ENCODE measurements at regions of chr3 and their contacts with region 1.

Region 1: DNA sequence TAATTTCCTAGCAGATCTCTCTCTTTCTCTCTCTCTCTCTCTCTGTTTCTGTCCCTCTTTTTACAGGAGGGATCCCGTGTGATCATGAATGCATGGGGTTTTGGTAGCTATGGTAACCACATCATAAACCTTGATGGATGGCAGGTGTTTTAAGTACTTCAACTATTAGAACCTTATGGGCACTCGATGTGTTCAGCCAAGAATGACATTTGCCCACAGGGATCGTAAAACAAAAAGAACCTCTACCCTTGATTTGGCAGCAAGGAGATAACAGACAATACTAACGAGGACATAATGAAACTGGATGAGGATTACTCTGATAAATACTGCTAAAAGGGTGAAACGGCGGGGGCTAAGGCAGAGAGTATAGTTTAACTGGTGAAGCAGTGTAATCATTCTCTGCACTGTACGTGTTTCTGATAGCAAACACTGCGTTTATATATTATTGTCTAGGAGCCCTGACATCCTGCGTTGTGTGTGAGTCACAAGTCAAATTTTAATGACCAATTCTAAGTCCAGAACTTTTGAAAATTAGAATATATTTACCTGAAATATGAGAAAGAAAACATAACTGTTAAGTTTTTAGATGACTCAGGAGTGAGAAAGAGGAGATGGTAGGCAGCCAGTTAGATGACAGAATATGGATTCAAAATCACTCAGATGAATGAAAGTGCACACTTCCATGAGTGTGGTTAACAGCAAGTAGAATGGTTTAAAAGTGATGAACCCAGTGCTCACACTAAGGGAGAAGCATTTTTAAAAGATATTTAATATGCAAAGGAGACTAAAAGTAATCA is 80.3 kb downstream of the OTOL1 start:
- DNase-seq: no peak
- H3K4me3 ChIP-seq: no peak overlapping the region
- H3K27ac ChIP-seq: no peak overlapping the region
- H3K4me1 ChIP-seq: no peaks in the 10 kb centered on the region
- H3K27me3 ChIP-seq: no peaks in the 10 kb centered on the region
- CTCF ChIP-seq: no peak
- POLR2A ChIP-seq: no peak

Region 2: DNA sequence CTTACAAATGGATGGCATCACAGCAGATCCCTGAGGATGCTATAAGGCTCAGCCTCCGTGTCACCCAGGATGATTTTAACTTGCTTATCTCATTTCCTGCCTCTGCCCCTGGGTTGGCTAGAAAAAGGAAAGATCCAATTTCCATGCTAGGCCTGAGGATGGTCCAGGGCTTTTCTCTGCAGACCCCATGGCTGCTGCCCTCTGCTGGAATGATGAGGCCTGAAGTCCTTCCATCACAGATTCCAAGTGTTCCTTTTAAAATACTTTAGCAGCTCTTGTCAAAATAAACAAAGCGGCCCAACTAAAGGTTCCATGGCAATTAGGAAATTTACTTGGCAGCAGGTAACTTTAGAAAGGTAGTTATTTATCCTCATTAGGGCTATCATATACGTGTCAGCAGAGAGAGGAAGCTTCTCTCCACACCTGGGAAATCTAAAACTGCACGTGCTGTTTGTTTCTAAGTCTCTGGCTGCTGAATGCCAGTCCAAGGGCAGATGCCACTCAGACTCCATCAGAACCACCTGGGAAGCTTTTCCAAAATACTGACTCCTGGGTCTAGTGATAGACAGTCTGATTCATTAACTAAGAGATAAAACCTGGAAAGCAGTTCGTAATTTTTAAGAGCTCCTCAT is 1990.2 kb before region 1 on chr3:
- intact Hi-C with region 1: no loop called
- DNase-seq: no peak
- H3K4me3 ChIP-seq: no peak overlapping the region
- H3K27ac ChIP-seq: no peak overlapping the region
- H3K4me1 ChIP-seq: no peaks in the 10 kb centered on the region
- H3K27me3 ChIP-seq: no peaks in the 10 kb centered on the region
- CTCF ChIP-seq: no peak
- POLR2A ChIP-seq: no peak

Region 3: DNA sequence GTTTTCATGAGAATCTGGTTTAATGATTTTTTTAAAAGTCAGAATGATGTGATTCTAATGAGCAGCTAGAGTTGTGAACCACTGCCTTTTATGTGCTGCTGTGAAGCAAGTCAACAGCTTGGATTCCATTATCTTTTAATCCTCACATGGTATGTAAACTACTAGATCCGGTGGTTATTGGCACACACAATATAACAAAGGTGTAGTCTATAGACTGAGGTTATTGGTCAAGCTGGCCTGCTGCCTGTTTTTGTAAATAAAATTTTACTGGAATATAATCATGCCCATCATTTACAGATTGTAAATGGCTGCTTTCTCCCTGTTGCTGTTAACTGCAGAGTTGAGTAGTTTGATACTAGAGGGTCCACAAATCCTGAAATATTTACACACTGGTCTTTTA is 22.8 kb after region 1 on chr3:
- intact Hi-C with region 1: loop called (anchors 1 kb)
- DNase-seq: no peak
- H3K4me3 ChIP-seq: no peak overlapping the region
- H3K27ac ChIP-seq: no peak overlapping the region
- H3K4me1 ChIP-seq: no peaks in the 10 kb centered on the region
- H3K27me3 ChIP-seq: no peaks in the 10 kb centered on the region
- CTCF ChIP-seq: no peak
- POLR2A ChIP-seq: no peak

Measured in breast epithelium (tissue), 4 donors.